Adrenal gland (tissue), 19 donors: ENCODE measurements at regions of chr3 and their contacts with region 1.

Region 1: GRCh38 chr3:9727041-9727595 is 4.4 kb upstream of the BRPF1 start:
- DNase-seq: peak in 1 of 7 donors; percentile 17
- H3K4me3 ChIP-seq: no peak overlapping the region
- H3K27ac ChIP-seq: no peak overlapping the region
- H3K4me1 ChIP-seq: peaks cover 0 to 7% of the 10 kb centered on the region in 2 donors
- H3K27me3 ChIP-seq: no peaks in the 10 kb centered on the region
- CTCF ChIP-seq: peak in 4 of 6 experiments; percentile 11 to 32 (median 27)
- POLR2A ChIP-seq: no peak

Region 2: GRCh38 chr3:9503283-9503682 is 223.8 kb before region 1 on chr3:
- intact Hi-C with region 1: loop called in 1 of 2 experiments (anchors 10 kb)
- DNase-seq: peak; percentile 33 to 90 (median 75)
- H3K4me3 ChIP-seq: no peak overlapping the region
- H3K27ac ChIP-seq: no peak overlapping the region
- H3K4me1 ChIP-seq: peaks cover 0 to 10% of the 10 kb centered on the region in 2 donors
- H3K27me3 ChIP-seq: no peaks in the 10 kb centered on the region
- CTCF ChIP-seq: peak; percentile 67 to 87 (median 82)
- POLR2A ChIP-seq: no peak

Region 3: GRCh38 chr3:9615003-9615625 is 112.0 kb before region 1 on chr3:
- intact Hi-C with region 1: no loop called
- DNase-seq: no peak
- H3K4me3 ChIP-seq: no peak overlapping the region
- H3K27ac ChIP-seq: no peak overlapping the region
- H3K4me1 ChIP-seq: no peaks in the 10 kb centered on the region
- H3K27me3 ChIP-seq: peaks cover 4% of the 10 kb centered on the region
- CTCF ChIP-seq: no peak
- POLR2A ChIP-seq: no peak

Region 4: GRCh38 chr3:9826815-9827567 is 99.9 kb after region 1 on chr3:
- intact Hi-C with region 1: no loop called
- DNase-seq: no peak
- H3K4me3 ChIP-seq: no peak overlapping the region
- H3K27ac ChIP-seq: no peak overlapping the region
- H3K4me1 ChIP-seq: no peaks in the 10 kb centered on the region
- H3K27me3 ChIP-seq: no peaks in the 10 kb centered on the region
- CTCF ChIP-seq: peak in 4 of 6 experiments; percentile 9 to 40 (median 29)
- POLR2A ChIP-seq: no peak

Region 5: DNA sequence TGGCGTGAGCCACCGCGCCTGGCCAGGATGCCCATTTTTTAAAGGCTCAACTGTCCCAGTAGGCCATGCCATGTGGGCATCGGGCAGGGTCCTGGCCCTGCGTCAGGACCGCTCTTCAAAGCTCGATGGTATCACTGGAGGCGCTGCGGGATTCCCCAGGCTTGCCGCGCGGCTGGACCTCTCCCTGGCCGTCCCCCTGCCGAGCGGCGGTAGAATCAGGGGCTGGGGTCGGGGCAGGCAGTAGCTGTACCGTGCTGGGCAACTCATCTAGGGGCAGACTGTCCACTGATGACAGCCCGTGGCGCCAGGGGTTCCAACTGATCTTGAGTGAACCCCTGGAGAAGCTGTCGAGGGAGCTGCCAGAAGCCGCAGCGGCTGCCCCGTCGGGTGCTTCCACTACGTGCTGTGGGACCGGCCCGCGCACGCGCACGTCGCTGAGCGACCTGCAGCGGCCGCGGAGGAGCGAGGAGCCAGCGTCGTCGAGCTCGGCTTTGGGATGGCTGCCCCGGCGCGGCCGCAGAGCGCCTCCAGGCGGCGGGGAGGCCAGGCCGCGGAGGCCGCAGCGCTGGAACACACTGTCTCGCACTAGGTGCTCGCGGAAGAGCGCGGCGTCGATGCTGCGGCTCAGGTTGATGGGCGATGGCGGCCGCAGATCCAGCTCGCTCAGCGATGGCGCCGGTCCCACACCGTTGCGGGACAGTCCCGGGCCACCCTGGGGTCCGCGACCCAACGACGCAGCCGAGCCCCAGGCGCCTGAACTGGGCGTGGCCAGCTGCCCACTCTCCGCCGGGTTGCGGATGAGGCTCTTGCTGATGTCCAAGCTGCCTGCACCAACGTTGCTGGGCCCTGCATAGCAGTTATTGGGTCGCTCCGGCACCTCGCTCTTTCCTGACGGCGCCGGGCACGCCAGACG is 219.2 kb after region 1 on chr3:
- intact Hi-C with region 1: loop called in 1 of 2 experiments (anchors 10 kb)
- DNase-seq: peak; percentile 87 to 93 (median 90)
- H3K4me3 ChIP-seq: peak overlapping the region in 2 of 4 donors; percentile 39
- H3K27ac ChIP-seq: peak overlapping the region; percentile 39 to 88 (median 74)
- H3K4me1 ChIP-seq: peaks cover 5 to 24% of the 10 kb centered on the region in 2 donors
- H3K27me3 ChIP-seq: no peaks in the 10 kb centered on the region
- CTCF ChIP-seq: peak; percentile 24 to 86 (median 59)
- POLR2A ChIP-seq: peak; percentile 39 to 80